ENCODE measurements at regions of chr5 and their contacts with region 1.

Region 1: GRCh38 chr5:95846554-95847260 is 24.2 kb upstream of the GLRX start:
- DNase-seq: peak; percentile 78
- H3K4me3 ChIP-seq: no peak overlapping the region
- H3K27ac ChIP-seq: no peak overlapping the region
- H3K4me1 ChIP-seq: no peaks in the 10 kb centered on the region
- H3K27me3 ChIP-seq: no peaks in the 10 kb centered on the region
- CTCF ChIP-seq: peak; percentile 92

Region 2: GRCh38 chr5:95554647-95555548 is 291.8 kb before region 1 on chr5 and contains the starts of genes ARSK and SKIC3:
- CTCF ChIA-PET with region 1: no interaction called
- POLR2A ChIA-PET with region 1: no interaction called
- intact Hi-C with region 1: loop called (anchors 10 kb)
- DNase-seq: peak; percentile 99
- H3K4me3 ChIP-seq: peak within 1 kb of the TSS; percentile 66
- H3K27ac ChIP-seq: peak within 1 kb of the TSS; percentile 59
- H3K4me1 ChIP-seq: peaks cover 7% of the 10 kb centered on the region
- H3K27me3 ChIP-seq: no peaks in the 10 kb centered on the region
- CTCF ChIP-seq: peak; percentile 43
- total RNA-seq, gene ARSK: 5.6 and 6.0 TPM in 2 replicates
- total RNA-seq, gene SKIC3: 91.0 and 92.1 TPM in 2 replicates

Region 3: GRCh38 chr5:95664204-95664786 is 182.4 kb before region 1 on chr5:
- CTCF ChIA-PET with region 1: no interaction called
- POLR2A ChIA-PET with region 1: no interaction called
- intact Hi-C with region 1: loop called (anchors 5 kb)
- DNase-seq: peak; percentile 38
- H3K4me3 ChIP-seq: no peak overlapping the region
- H3K27ac ChIP-seq: no peak overlapping the region
- H3K4me1 ChIP-seq: no peaks in the 10 kb centered on the region
- H3K27me3 ChIP-seq: no peaks in the 10 kb centered on the region
- CTCF ChIP-seq: peak; percentile 86

Region 4: DNA sequence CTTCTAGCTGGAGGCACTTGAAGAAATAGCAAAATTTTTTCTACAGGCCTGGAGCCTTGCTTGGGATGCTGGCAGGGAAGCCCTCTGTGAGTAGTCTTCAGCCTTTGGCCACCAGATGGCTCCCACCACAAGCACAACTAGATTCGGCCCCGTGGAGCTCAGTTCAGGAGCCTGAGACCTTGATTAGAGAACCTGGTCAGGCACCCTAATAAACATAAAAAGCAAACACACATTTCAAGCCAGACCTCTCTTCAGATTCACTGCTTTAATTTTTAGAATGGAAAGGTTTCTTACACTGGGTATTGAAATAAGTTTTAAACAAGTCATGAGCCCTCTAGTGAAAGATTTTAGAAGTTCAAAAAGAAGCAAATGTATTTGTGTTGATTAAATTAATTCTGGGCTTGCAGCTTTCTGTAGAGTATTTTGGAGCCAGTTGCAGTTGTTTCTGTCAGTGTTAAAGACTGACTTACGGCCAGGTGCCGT is 65.6 kb before region 1 on chr5:
- CTCF ChIA-PET with region 1: interaction called, 24 read pairs
- POLR2A ChIA-PET with region 1: interaction called, 5 read pairs
- intact Hi-C with region 1: loop called (anchors 1 kb)
- DNase-seq: peak; percentile 84
- H3K4me3 ChIP-seq: no peak overlapping the region
- H3K27ac ChIP-seq: no peak overlapping the region
- H3K4me1 ChIP-seq: no peaks in the 10 kb centered on the region
- H3K27me3 ChIP-seq: no peaks in the 10 kb centered on the region
- CTCF ChIP-seq: peak; percentile 97

Region 5: GRCh38 chr5:95822542-95823181 is 24.0 kb before region 1 on chr5 and contains the start of gene GLRX:
- CTCF ChIA-PET with region 1: interaction called, 11 read pairs
- POLR2A ChIA-PET with region 1: no interaction called
- intact Hi-C with region 1: no loop called
- DNase-seq: peak; percentile 84
- H3K4me3 ChIP-seq: peak within 1 kb of the TSS; percentile 62
- H3K27ac ChIP-seq: peak within 1 kb of the TSS; percentile 70
- H3K4me1 ChIP-seq: peaks cover 26% of the 10 kb centered on the region
- H3K27me3 ChIP-seq: no peaks in the 10 kb centered on the region
- CTCF ChIP-seq: no peak
- total RNA-seq, gene GLRX: 27.3 and 28.6 TPM in 2 replicates

Region 6: DNA sequence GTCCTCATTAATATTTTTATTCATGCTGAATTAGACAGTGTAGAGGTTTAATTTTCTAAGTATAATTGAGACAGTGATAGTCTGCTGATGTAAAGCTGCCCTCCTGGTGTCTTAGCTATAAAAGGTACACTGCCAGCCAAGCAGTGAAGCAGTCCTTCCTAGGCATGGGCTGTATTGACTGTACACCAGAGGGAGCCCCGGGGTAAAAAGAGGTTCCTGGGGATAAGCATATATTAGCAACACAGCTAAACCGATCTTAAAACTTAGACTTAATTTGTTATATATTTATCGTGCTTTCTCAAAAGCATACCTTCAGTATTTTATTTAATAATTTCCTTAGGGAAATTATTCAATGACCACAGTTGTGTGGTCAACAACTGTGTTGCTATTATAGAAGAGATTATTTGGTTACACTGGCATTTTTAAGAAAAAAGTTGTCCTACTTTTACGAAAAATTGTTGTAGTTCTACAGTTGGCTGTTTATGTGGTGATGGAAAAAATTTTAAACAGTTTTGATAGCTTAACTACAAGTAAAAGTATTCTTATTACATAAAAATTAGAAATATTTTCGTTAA is 46.2 kb after region 1 on chr5:
- CTCF ChIA-PET with region 1: no interaction called
- POLR2A ChIA-PET with region 1: no interaction called
- intact Hi-C with region 1: no loop called
- DNase-seq: peak; percentile 72
- H3K4me3 ChIP-seq: no peak overlapping the region
- H3K27ac ChIP-seq: no peak overlapping the region
- H3K4me1 ChIP-seq: no peaks in the 10 kb centered on the region
- H3K27me3 ChIP-seq: no peaks in the 10 kb centered on the region
- CTCF ChIP-seq: peak; percentile 70

Region 7: DNA sequence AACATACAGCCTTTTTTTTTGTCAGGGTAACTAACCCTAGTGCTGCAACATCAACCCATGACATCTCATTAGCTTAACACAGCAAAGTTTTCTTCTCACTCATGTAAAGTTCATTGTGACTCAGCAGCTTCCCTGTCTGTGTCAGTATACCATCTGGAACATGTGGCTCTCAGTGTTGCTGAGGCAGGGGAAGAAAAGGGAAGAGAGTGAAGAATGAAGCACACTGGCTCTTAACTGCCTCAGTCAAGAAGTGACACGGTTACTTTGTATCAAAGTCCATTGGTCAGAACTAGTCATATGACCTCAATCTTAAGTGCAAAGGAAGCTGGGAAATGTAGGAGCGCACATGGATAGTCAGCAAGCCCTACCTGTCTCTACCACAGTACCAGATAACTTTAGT is 300.0 kb after region 1 on chr5:
- CTCF ChIA-PET with region 1: no interaction called
- POLR2A ChIA-PET with region 1: no interaction called
- intact Hi-C with region 1: no loop called
- DNase-seq: peak; percentile 15
- H3K4me3 ChIP-seq: no peak overlapping the region
- H3K27ac ChIP-seq: no peak overlapping the region
- H3K4me1 ChIP-seq: no peaks in the 10 kb centered on the region
- H3K27me3 ChIP-seq: no peaks in the 10 kb centered on the region
- CTCF ChIP-seq: no peak